ENCODE measurements at regions of chr9 and their contacts with region 1.

Region 1: GRCh38 chr9:130940693-130941576 is 1.9 kb upstream of the FIBCD1 start:
- DNase-seq: peak; percentile 85 to 96
- H3K4me3 ChIP-seq: no peak overlapping the region; the same call in 1 of the 2 replicates
- H3K27ac ChIP-seq: no peak overlapping the region
- H3K4me1 ChIP-seq: peaks cover 14% of the 10 kb centered on the region
- H3K27me3 ChIP-seq: peaks cover 17% of the 10 kb centered on the region; the same call in 1 of the 2 replicates
- CTCF ChIP-seq: peak; percentile 91

Region 2: DNA sequence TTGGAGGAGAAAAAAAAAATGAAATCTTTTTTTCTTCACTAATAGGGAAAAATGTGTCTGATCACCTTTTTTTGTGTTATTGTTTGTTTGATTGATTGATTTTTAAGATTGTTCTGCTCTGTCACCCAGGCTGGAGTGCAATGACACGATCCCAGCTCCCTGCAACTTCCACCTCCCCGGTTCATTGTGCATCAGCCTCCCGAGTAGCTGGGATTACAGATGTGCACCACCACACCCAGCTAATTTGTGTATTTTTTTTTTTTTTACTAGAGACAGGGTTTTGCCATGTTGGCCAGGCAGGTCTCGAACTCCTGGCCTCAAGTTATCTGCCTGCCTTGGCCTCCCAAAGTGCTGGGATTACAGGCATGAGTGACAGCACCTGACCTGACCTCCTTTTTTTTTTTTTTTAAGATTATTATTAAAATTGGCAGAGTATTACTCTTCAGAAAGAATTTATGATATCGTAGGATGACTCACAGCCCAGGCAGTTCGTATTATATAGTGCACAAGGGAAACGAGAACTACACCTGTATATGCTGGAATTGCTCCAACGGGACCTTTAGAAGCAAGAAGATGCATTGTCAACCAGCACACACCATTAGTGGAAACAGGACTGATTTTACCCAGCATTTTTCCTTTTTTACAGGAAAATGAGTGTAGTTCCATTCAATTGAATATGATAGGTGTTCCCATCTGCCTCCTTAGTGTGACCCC is 333.9 kb before region 1 on chr9:
- CTCF ChIA-PET with region 1: no interaction called
- POLR2A ChIA-PET with region 1: no interaction called
- intact Hi-C with region 1: no loop called
- DNase-seq: peak in 1 of 2 experiments; percentile 48
- H3K4me3 ChIP-seq: no peak overlapping the region
- H3K27ac ChIP-seq: no peak overlapping the region
- H3K4me1 ChIP-seq: no peaks in the 10 kb centered on the region
- H3K27me3 ChIP-seq: no peaks in the 10 kb centered on the region
- CTCF ChIP-seq: no peak

Region 3: GRCh38 chr9:130701056-130702022 is 239.6 kb before region 1 on chr9:
- CTCF ChIA-PET with region 1: interaction called, 12 read pairs
- POLR2A ChIA-PET with region 1: interaction called, 7 read pairs
- intact Hi-C with region 1: loop called (anchors 2 kb)
- DNase-seq: peak in 1 of 2 experiments; percentile 71
- H3K4me3 ChIP-seq: no peak overlapping the region
- H3K27ac ChIP-seq: no peak overlapping the region
- H3K4me1 ChIP-seq: no peaks in the 10 kb centered on the region
- H3K27me3 ChIP-seq: no peaks in the 10 kb centered on the region
- CTCF ChIP-seq: peak; percentile 94

Region 4: GRCh38 chr9:130707225-130707976 is 233.5 kb before region 1 on chr9:
- CTCF ChIA-PET with region 1: interaction called, 12 read pairs
- POLR2A ChIA-PET with region 1: no interaction called
- intact Hi-C with region 1: loop called (anchors 2 kb)
- DNase-seq: peak; percentile 59 to 61
- H3K4me3 ChIP-seq: no peak overlapping the region
- H3K27ac ChIP-seq: no peak overlapping the region
- H3K4me1 ChIP-seq: no peaks in the 10 kb centered on the region
- H3K27me3 ChIP-seq: no peaks in the 10 kb centered on the region
- CTCF ChIP-seq: peak; percentile 94

Region 5: DNA sequence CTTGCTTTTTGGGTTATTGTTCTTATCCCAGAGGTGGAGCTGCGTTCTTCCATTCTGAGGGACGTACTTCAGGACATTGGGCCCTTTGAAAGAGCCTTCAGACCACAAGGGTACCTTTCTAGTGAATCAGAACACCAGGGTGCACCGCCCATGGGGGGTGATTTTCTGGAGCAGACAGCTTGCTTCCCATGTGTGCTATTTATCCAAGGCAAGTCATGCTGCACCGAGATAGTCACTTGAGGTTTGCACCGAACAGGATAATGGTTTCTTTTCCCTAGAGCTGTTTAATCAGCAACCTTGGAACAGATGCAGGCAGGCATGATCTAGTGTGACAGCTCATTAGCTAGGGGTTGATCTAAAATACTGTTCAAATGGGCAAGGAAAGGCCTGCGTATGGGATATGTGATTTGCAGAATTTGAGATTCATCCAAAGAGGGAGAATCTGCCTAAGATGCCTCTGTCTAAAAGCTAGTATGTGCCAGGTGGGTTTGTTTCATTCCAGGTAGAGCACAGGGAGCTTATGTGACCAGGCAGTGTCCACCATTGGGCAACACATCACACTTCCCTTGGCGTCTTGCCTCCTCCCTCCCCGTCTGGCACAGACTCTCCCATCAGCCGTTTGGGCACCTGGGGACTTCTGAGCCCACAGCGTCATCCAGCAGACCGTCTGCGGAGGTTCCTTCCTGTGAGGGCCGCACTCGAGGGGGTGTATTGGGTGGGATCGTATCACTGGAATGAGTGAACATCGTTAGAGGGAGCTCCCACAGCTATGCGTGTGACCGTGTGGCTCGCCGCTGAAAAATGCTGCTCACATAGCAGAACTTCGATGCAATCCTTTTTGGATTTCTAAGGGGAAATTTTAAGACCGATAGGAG is 82.8 kb before region 1 on chr9:
- CTCF ChIA-PET with region 1: no interaction called
- POLR2A ChIA-PET with region 1: no interaction called
- intact Hi-C with region 1: no loop called
- DNase-seq: no peak
- H3K4me3 ChIP-seq: no peak overlapping the region
- H3K27ac ChIP-seq: no peak overlapping the region
- H3K4me1 ChIP-seq: no peaks in the 10 kb centered on the region
- H3K27me3 ChIP-seq: no peaks in the 10 kb centered on the region
- CTCF ChIP-seq: no peak

Region 6: GRCh38 chr9:130893341-130894101 is 47.4 kb before region 1 on chr9:
- CTCF ChIA-PET with region 1: no interaction called
- POLR2A ChIA-PET with region 1: no interaction called
- intact Hi-C with region 1: loop called (anchors 5 kb)
- DNase-seq: no peak
- H3K4me3 ChIP-seq: no peak overlapping the region
- H3K27ac ChIP-seq: no peak overlapping the region
- H3K4me1 ChIP-seq: no peaks in the 10 kb centered on the region
- H3K27me3 ChIP-seq: no peaks in the 10 kb centered on the region
- CTCF ChIP-seq: peak; percentile 26; the same call in 1 of the 2 replicates

Region 7: GRCh38 chr9:130997925-130998596 is 57.1 kb after region 1 on chr9:
- CTCF ChIA-PET with region 1: interaction called, 5 read pairs
- POLR2A ChIA-PET with region 1: no interaction called
- intact Hi-C with region 1: loop called (anchors 1 kb)
- DNase-seq: peak; percentile 52 to 84
- H3K4me3 ChIP-seq: no peak overlapping the region
- H3K27ac ChIP-seq: no peak overlapping the region
- H3K4me1 ChIP-seq: no peaks in the 10 kb centered on the region
- H3K27me3 ChIP-seq: peaks cover 29% of the 10 kb centered on the region
- CTCF ChIP-seq: peak; percentile 88

Region 8: DNA sequence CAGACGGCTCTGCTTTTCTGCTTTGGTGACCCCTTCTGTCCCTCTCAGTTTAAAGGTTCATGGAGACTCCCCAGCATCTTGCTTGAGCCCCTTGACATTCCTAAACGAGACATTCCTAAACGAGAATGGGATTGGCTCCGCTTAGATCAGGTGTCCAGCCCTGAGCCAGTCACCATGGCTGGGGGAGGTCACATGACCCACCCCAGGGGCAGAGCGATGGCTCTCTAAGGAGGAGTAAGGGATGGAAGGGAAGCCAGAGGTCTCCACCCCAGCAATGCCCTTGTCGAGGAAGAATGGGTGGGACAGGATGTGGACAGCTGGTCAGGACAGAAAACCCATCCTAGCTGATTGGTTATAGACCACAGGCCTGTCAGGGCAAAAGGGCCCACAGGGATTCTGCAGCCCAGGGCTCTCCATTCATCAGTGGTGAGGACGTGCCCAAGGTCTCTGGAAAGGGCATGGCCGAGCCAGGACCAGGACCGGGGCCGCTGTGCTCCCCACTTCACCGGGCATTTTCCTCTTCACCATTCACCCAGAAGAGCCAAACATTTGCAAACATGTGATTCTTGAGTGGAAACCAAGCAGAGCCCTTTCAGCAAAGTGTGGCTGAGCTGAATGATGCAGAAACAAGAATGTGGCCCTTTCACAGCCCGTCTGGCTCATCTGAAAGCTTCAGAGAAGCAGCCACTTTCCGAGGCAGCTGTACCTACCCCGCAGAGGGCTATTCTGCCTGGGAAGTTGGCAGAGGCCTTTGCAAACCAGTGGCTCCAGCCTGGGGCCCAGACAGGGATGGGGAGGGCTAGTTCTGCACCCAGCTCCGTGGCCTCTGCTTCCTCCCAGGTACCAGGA is 135.6 kb after region 1 on chr9:
- CTCF ChIA-PET with region 1: no interaction called
- POLR2A ChIA-PET with region 1: no interaction called
- intact Hi-C with region 1: no loop called
- DNase-seq: no peak
- H3K4me3 ChIP-seq: no peak overlapping the region
- H3K27ac ChIP-seq: no peak overlapping the region
- H3K4me1 ChIP-seq: peaks cover 18% of the 10 kb centered on the region
- H3K27me3 ChIP-seq: no peaks in the 10 kb centered on the region
- CTCF ChIP-seq: no peak

Region 9: GRCh38 chr9:131253891-131254491 is 313.1 kb after region 1 on chr9:
- CTCF ChIA-PET with region 1: no interaction called
- POLR2A ChIA-PET with region 1: no interaction called
- intact Hi-C with region 1: no loop called
- DNase-seq: no peak
- H3K4me3 ChIP-seq: no peak overlapping the region
- H3K27ac ChIP-seq: no peak overlapping the region
- H3K4me1 ChIP-seq: peaks cover 9% of the 10 kb centered on the region
- H3K27me3 ChIP-seq: no peaks in the 10 kb centered on the region
- CTCF ChIP-seq: no peak